CD8-positive, alpha-beta T cell (primary cell): ENCODE measurements at regions of chr1 and their contacts with region 1.

Region 1: DNA sequence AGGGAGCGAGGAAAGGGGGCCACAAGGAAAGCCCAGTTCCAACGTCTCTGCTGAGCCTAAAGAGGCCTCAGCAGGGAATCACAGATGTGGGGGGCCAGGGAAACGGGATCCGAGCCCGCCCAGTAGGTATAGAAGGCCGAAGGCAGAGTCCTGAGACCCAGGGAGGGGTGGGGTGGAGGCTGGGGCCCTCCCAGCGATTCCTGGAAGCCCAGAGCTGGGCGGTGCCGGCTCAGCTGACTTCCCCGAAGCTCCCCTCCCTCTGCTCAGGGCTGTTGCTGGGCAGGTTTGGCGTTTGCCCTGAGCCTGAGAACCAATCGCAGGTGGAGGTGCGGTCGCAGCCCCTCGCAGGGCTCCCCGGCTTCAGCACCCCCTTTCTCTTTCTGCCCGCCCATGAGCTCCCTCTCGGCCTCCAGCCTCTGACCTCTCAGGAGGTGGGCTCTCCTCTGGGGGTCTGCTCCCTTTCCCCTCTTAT is 12.8 kb downstream of the ADAMTSL4 start:
- DNase-seq: peak; percentile 60 to 90 (median 83)
- ATAC-seq: peak; percentile 38
- H3K4me3 ChIP-seq: peak overlapping the region; percentile 82 to 89
- H3K4me3 Mint-ChIP-seq: peak overlapping the region; percentile 95
- H3K27ac ChIP-seq: peak overlapping the region; percentile 90 to 94
- H3K27ac Mint-ChIP-seq: peak overlapping the region; percentile 100
- H3K4me1 ChIP-seq: peaks cover 61% of the 10 kb centered on the region
- H3K4me1 Mint-ChIP-seq: peaks cover 56% of the 10 kb centered on the region
- H3K27me3 ChIP-seq: no peaks in the 10 kb centered on the region
- H3K27me3 Mint-ChIP-seq: no peaks in the 10 kb centered on the region
- CTCF ChIP-seq: no peak

Region 2: GRCh38 chr1:150213170-150214098 is 348.6 kb before region 1 on chr1:
- CTCF ChIA-PET with region 1: no interaction called
- POLR2A ChIA-PET with region 1: no interaction called
- intact Hi-C with region 1: no loop called
- DNase-seq: peak; percentile 82 to 96 (median 92)
- ATAC-seq: peak; percentile 99
- H3K4me3 ChIP-seq: peak overlapping the region; percentile 54 to 62
- H3K4me3 Mint-ChIP-seq: peak overlapping the region; percentile 93
- H3K27ac ChIP-seq: peak overlapping the region; percentile 70 to 74
- H3K27ac Mint-ChIP-seq: peak overlapping the region; percentile 98
- H3K4me1 ChIP-seq: peaks cover 9% of the 10 kb centered on the region
- H3K4me1 Mint-ChIP-seq: peaks cover 13% of the 10 kb centered on the region
- H3K27me3 ChIP-seq: no peaks in the 10 kb centered on the region
- H3K27me3 Mint-ChIP-seq: no peaks in the 10 kb centered on the region
- CTCF ChIP-seq: peak; percentile 54

Region 3: GRCh38 chr1:150464422-150464826 is 97.6 kb before region 1 on chr1:
- CTCF ChIA-PET with region 1: interaction called, 5 read pairs
- POLR2A ChIA-PET with region 1: no interaction called
- intact Hi-C with region 1: loop called (anchors 1 kb)
- DNase-seq: peak; percentile 46 to 82 (median 73)
- ATAC-seq: peak; percentile 96
- H3K4me3 ChIP-seq: no peak overlapping the region
- H3K4me3 Mint-ChIP-seq: no peak overlapping the region
- H3K27ac ChIP-seq: no peak overlapping the region
- H3K27ac Mint-ChIP-seq: peak overlapping the region; percentile 33
- H3K4me1 ChIP-seq: no peaks in the 10 kb centered on the region
- H3K4me1 Mint-ChIP-seq: peaks cover 4% of the 10 kb centered on the region
- H3K27me3 ChIP-seq: no peaks in the 10 kb centered on the region
- H3K27me3 Mint-ChIP-seq: no peaks in the 10 kb centered on the region
- CTCF ChIP-seq: peak; percentile 78

Region 4: DNA sequence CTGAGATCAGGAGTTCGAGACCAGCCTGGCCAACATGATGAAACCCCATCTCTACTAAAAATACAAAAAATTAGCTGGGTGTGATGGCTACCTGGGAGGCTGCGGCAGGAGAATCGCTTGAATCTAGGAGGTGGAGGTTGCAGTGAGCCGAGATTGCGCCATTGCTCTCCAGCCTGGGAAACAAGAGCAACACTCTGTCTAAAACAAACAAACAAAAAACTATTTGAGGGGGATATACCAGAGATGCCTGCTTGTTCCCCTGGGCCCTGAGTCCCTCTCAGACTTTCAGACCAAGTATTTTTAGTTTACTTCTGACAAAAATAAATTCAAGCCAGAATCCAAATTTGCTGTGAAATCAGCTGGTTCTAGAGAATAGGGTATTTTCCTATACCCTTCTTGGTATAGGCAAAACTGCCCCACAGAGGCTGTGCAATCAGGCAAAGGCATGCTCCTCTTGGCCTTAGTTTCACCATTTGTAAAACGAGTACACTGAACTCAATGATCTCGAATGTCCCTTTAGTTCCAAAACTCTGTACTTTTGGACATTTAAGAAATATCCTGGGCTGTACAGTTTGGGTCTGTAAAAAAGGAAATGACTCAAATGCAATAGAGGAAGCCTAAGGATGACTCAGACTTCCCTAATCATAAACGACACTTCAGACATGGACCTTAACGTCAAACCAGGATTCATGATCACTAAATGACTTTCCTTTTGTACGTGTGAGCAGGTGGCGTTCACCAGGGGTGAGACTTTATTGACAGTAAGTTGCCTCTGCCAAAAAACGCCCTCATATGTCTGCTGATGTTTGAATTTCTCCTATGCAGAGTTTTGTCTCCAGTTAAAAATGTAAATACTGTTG is 51.3 kb after region 1 on chr1:
- CTCF ChIA-PET with region 1: interaction called, 799 read pairs
- POLR2A ChIA-PET with region 1: interaction called, 82 read pairs
- intact Hi-C with region 1: loop called in 1 of 2 experiments (anchors 1 kb)
- DNase-seq: peak in 6 of 9 experiments; percentile 22 to 89 (median 60)
- ATAC-seq: peak; percentile 32
- H3K4me3 ChIP-seq: no peak overlapping the region
- H3K4me3 Mint-ChIP-seq: peak overlapping the region; percentile 9
- H3K27ac ChIP-seq: peak overlapping the region in 1 of 2 experiments; percentile 95
- H3K27ac Mint-ChIP-seq: peak overlapping the region; percentile 83
- H3K4me1 ChIP-seq: peaks cover 33% of the 10 kb centered on the region
- H3K4me1 Mint-ChIP-seq: peaks cover 55% of the 10 kb centered on the region
- H3K27me3 ChIP-seq: no peaks in the 10 kb centered on the region
- H3K27me3 Mint-ChIP-seq: no peaks in the 10 kb centered on the region
- CTCF ChIP-seq: no peak

Region 5: GRCh38 chr1:150696590-150697524 is 134.8 kb after region 1 on chr1 and contains the start of gene GOLPH3L:
- CTCF ChIA-PET with region 1: interaction called, 5 read pairs
- POLR2A ChIA-PET with region 1: interaction called, 9 read pairs
- intact Hi-C with region 1: loop called in 1 of 2 experiments (anchors 5 kb)
- DNase-seq: peak; percentile 76 to 97 (median 88)
- ATAC-seq: peak; percentile 98
- H3K4me3 ChIP-seq: peak within 1 kb of the TSS; percentile 81 to 88
- H3K4me3 Mint-ChIP-seq: peak within 1 kb of the TSS; percentile 98
- H3K27ac ChIP-seq: peak within 1 kb of the TSS; percentile 70 to 81
- H3K27ac Mint-ChIP-seq: peak within 1 kb of the TSS; percentile 92
- H3K4me1 ChIP-seq: peaks cover 7% of the 10 kb centered on the region
- H3K4me1 Mint-ChIP-seq: peaks cover 38% of the 10 kb centered on the region
- H3K27me3 ChIP-seq: no peaks in the 10 kb centered on the region
- H3K27me3 Mint-ChIP-seq: peaks cover 2% of the 10 kb centered on the region
- CTCF ChIP-seq: no peak
- total RNA-seq, gene GOLPH3L: 1.6 to 1.8 TPM

Region 6: DNA sequence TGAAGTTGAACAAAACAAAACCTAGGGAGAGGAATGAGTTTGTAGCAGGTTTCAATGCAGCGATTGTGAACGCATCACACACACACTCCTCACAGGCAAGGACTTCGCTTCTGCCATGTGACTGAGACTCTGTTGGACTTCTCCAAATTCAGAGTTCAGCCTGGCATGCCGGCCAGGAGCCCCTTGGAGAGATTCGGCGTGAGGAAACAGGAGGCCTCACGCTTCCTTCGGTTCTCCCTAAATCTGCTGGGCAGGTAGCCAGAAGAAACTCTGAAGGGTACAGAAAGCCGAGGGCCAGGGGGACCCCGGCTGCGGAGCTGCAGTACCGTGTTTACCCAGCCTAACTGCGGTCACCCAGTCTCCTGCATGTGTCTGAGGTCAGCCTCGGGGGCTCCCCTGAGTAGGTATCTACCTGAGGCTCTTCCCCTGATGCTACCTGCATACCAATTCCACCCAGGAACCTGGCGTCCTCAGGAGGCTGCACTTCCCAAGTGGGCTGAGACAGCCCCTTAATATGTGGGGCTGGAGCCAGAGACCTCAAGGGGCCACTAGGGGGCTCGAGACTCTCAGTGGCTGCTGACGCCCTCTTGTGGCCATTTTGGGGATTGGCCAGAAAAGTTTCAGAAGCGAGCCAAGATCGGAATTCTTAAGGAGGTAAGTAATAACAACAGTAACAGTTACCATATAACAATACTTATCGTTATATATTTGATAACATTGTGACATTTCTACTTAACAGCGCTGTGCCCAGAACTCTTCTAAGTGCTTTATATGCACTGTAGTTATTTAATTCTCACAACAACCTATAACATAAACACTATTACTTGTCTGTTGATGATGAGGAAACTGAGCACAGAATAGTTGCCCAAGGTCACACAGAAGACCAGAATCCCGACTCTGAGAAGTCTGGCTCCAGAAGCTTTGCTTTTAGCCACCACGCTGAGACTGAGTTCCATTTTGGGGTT is 417.4 kb after region 1 on chr1:
- CTCF ChIA-PET with region 1: no interaction called
- POLR2A ChIA-PET with region 1: interaction called, 3 read pairs
- intact Hi-C with region 1: loop called in 1 of 2 experiments (anchors 10 kb)
- DNase-seq: peak; percentile 83 to 93 (median 90)
- ATAC-seq: peak; percentile 62
- H3K4me3 ChIP-seq: peak overlapping the region; percentile 22 to 32
- H3K4me3 Mint-ChIP-seq: peak overlapping the region; percentile 57
- H3K27ac ChIP-seq: peak overlapping the region in 1 of 2 experiments; percentile 47
- H3K27ac Mint-ChIP-seq: peak overlapping the region; percentile 3
- H3K4me1 ChIP-seq: peaks cover 41% of the 10 kb centered on the region
- H3K4me1 Mint-ChIP-seq: peaks cover 38% of the 10 kb centered on the region
- H3K27me3 ChIP-seq: no peaks in the 10 kb centered on the region
- H3K27me3 Mint-ChIP-seq: no peaks in the 10 kb centered on the region
- CTCF ChIP-seq: peak; percentile 100